Heart left ventricle (tissue), 16 donors: ENCODE measurements at regions of chr4 and their contacts with region 1.

Region 1: GRCh38 chr4:18593445-18594002 is 572.0 kb upstream of the LCORL start:
- DNase-seq: peak in 2 of 5 donors; percentile 32 to 40
- ATAC-seq: peak in 3 of 4 donors; percentile 50 to 73 (median 61)
- H3K4me3 ChIP-seq: no peak overlapping the region
- H3K27ac ChIP-seq: no peak overlapping the region
- H3K4me1 ChIP-seq: peaks cover 0 to 8% (median 0%) of the 10 kb centered on the region in 12 donors
- H3K27me3 ChIP-seq: peaks cover 0 to 4% (median 0%) of the 10 kb centered on the region in 9 donors
- CTCF ChIP-seq: peak; percentile 66 to 88 (median 82)
- POLR2A ChIP-seq: no peak

Region 2: GRCh38 chr4:17544205-17544604 is 1049.3 kb before region 1 on chr4:
- intact Hi-C with region 1: loop called in 6 of 10 experiments (anchors 2 to 10 kb)
- DNase-seq: no peak
- ATAC-seq: no peak
- H3K4me3 ChIP-seq: no peak overlapping the region
- H3K27ac ChIP-seq: no peak overlapping the region
- H3K4me1 ChIP-seq: peaks cover 0 to 7% (median 0%) of the 10 kb centered on the region in 12 donors
- H3K27me3 ChIP-seq: no peaks in the 10 kb centered on the region
- CTCF ChIP-seq: no peak
- POLR2A ChIP-seq: no peak

Region 3: DNA sequence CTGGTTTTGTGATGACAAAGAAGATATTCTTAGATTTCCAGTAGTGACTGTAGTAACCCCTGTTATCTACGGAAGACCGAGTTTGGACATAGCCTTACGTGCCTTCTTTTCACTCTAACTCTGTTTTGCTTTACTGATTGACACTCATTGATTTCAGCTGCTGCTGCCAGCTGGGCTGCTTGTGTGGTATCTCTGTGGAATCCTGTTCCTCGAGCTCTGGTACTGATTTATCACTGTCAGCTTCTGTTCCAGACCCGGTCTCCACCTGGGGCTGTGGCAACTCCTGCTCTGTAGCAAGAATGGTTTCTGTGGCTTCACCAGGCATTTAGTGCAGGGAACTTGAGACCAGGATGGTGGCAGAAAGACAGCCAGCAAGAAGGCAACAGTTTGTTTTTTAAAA is 1041.1 kb before region 1 on chr4:
- intact Hi-C with region 1: loop called in 8 of 10 experiments (anchors 2 to 10 kb)
- DNase-seq: no peak
- ATAC-seq: no peak
- H3K4me3 ChIP-seq: no peak overlapping the region
- H3K27ac ChIP-seq: no peak overlapping the region
- H3K4me1 ChIP-seq: no peaks in the 10 kb centered on the region
- H3K27me3 ChIP-seq: peaks cover 0 to 10% (median 3%) of the 10 kb centered on the region in 9 donors
- CTCF ChIP-seq: no peak
- POLR2A ChIP-seq: no peak

Region 4: GRCh38 chr4:17817020-17817419 is 776.5 kb before region 1 on chr4:
- intact Hi-C with region 1: loop called (anchors 2 to 5 kb)
- DNase-seq: no peak
- ATAC-seq: peak in 2 of 4 donors; percentile 36 to 49
- H3K4me3 ChIP-seq: no peak overlapping the region
- H3K27ac ChIP-seq: no peak overlapping the region
- H3K4me1 ChIP-seq: peaks cover 0 to 16% (median 0%) of the 10 kb centered on the region in 12 donors
- H3K27me3 ChIP-seq: no peaks in the 10 kb centered on the region
- CTCF ChIP-seq: peak; percentile 36 to 69 (median 56)
- POLR2A ChIP-seq: no peak